ENCODE measurements at regions of chr15 and their contacts with region 1.

Region 1: GRCh38 chr15:90931737-90932659 is at the start of gene HDDC3:
- DNase-seq: peak; percentile 87
- ATAC-seq: peak; percentile 59
- H3K4me3 ChIP-seq: peak within 1 kb of the TSS; percentile 92 to 93
- H3K27ac ChIP-seq: peak within 1 kb of the TSS; percentile 78
- H3K4me1 ChIP-seq: peaks cover 20 to 53% of the 10 kb centered on the region in 2 experiments; a peak in 3 of 4 replicates
- H3K27me3 ChIP-seq: no peaks in the 10 kb centered on the region
- CTCF ChIP-seq: peak in 2 of 3 experiments; percentile 84 to 92; a peak in 4 of 6 replicates
- POLR2A ChIP-seq: peak; percentile 56
- RAD21 ChIP-seq: no peak
- total RNA-seq, gene HDDC3: 20.4 TPM

Region 2: GRCh38 chr15:90291679-90292356 is 640.2 kb before region 1 on chr15:
- CTCF ChIA-PET with region 1: interaction called, 16 read pairs
- POLR2A ChIA-PET with region 1: interaction called, 3 read pairs
- RAD21 ChIA-PET with region 1: no interaction called
- intact Hi-C with region 1: loop called (anchors 1 kb)
- DNase-seq: peak; percentile 71
- ATAC-seq: peak; percentile 58
- H3K4me3 ChIP-seq: no peak overlapping the region
- H3K27ac ChIP-seq: no peak overlapping the region
- H3K4me1 ChIP-seq: peaks cover 7 to 24% of the 10 kb centered on the region in 2 experiments; a peak in 3 of 4 replicates
- H3K27me3 ChIP-seq: no peaks in the 10 kb centered on the region
- CTCF ChIP-seq: no peak
- POLR2A ChIP-seq: no peak
- RAD21 ChIP-seq: no peak

Region 3: GRCh38 chr15:90750186-90750585 is 181.8 kb before region 1 on chr15:
- CTCF ChIA-PET with region 1: no interaction called
- POLR2A ChIA-PET with region 1: no interaction called
- RAD21 ChIA-PET with region 1: no interaction called
- intact Hi-C with region 1: no loop called
- DNase-seq: no peak
- ATAC-seq: no peak
- H3K4me3 ChIP-seq: no peak overlapping the region
- H3K27ac ChIP-seq: no peak overlapping the region
- H3K4me1 ChIP-seq: no peaks in the 10 kb centered on the region
- H3K27me3 ChIP-seq: no peaks in the 10 kb centered on the region
- CTCF ChIP-seq: no peak
- POLR2A ChIP-seq: no peak
- RAD21 ChIP-seq: no peak

Region 4: DNA sequence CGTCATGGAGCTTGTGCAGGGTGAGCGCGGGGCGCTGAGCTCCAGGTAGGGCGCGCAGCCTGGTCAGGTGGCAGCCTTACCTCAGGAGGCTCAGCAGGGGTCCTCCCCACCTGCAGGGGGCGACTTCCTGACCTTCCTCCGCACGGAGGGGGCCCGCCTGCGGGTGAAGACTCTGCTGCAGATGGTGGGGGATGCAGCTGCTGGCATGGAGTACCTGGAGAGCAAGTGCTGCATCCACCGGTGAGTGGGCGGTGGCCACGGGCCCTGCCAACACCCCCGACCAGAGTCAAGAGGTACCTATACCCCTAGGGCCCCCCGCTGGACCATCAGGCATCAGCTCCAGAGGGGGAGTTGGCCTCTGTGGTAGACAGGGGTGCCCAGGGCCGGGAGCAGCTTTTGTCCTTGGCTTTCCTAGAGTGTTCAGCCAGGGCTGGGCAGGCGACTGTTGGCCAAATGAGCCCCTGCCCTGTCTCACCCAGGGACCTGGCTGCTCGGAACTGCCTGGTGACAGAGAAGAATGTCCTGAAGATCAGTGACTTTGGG is 38.8 kb before region 1 on chr15:
- CTCF ChIA-PET with region 1: interaction called, 20 read pairs
- POLR2A ChIA-PET with region 1: interaction called, 3 read pairs
- RAD21 ChIA-PET with region 1: interaction called in 1 of 2 experiments, 3 read pairs
- intact Hi-C with region 1: no loop called
- DNase-seq: peak; percentile 50
- ATAC-seq: peak; percentile 92
- H3K4me3 ChIP-seq: peak overlapping the region; percentile 68 to 79
- H3K27ac ChIP-seq: peak overlapping the region; percentile 41; the same call in 1 of the 2 replicates
- H3K4me1 ChIP-seq: peaks cover 0 to 15% of the 10 kb centered on the region in 2 experiments; a peak in 2 of 4 replicates
- H3K27me3 ChIP-seq: no peaks in the 10 kb centered on the region
- CTCF ChIP-seq: peak; percentile 55 to 70 (median 65); a peak in 5 of 6 replicates
- POLR2A ChIP-seq: peak; percentile 64
- RAD21 ChIP-seq: no peak; the same call in 1 of the 2 replicates

Region 5: DNA sequence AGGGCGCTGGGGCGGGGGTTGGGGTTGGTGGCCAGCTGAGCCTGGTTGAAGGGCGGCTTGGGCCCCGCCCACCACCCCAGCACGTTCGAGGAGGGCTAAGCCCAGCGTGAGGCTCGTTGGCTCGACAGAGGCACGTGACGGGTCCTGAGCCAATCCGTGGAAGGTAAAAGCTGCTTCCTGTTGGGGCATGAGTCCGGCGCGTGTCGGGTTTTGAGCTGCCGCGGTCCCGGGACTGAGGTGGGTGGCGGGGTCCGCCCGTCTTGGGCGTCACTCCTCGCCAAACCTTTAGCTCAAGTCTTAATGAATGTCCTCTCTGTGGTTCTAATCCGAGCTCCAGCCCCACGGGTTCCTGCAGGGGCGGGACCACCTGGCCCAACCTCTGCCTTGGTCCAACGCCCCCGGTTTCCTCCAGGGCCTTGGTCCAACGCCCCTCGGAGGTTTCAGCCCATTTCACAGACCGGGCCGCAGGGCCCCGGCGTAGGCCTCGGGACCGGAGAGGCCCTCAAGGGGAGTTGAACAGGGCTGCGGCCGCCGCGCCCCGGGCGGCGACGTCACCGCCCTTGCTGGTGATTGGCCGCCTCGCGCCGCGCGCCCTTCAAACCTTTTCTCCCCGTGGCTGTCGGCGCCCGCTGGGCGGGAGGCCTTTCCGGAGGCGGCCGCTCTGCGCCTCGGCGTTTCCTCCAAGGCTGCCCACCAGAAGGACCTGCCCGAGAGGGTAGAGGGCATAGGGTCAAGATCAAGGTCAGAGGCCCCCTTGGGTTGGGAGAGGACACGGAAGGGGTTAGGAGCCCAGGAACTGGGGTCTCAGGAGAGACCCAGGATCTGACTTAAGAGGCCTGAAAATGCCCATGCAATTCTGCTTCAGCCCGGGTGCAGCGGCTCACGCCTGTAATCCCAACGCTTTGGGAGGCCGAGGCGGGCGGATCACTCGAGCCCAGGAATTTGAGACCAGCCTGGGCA is 23.0 kb after region 1 on chr15 and contains the start of gene RCCD1:
- CTCF ChIA-PET with region 1: interaction called, 35 read pairs
- POLR2A ChIA-PET with region 1: interaction called, 21 read pairs
- RAD21 ChIA-PET with region 1: interaction called, 7 to 10 read pairs
- intact Hi-C with region 1: loop called (anchors 2 kb)
- DNase-seq: peak; percentile 92
- ATAC-seq: peak; percentile 93
- H3K4me3 ChIP-seq: peak within 1 kb of the TSS; percentile 71 to 75
- H3K27ac ChIP-seq: peak within 1 kb of the TSS; percentile 97
- H3K4me1 ChIP-seq: peaks cover 11 to 23% of the 10 kb centered on the region in 2 experiments
- H3K27me3 ChIP-seq: no peaks in the 10 kb centered on the region
- CTCF ChIP-seq: no peak
- POLR2A ChIP-seq: peak; percentile 84
- RAD21 ChIP-seq: no peak
- total RNA-seq, gene RCCD1: 38.5 TPM

Region 6: GRCh38 chr15:91049378-91050127 is 117.6 kb after region 1 on chr15:
- CTCF ChIA-PET with region 1: interaction called, 21 read pairs
- POLR2A ChIA-PET with region 1: interaction called, 4 read pairs
- RAD21 ChIA-PET with region 1: no interaction called
- intact Hi-C with region 1: loop called (anchors 1 kb)
- DNase-seq: peak; percentile 73
- ATAC-seq: peak; percentile 94
- H3K4me3 ChIP-seq: no peak overlapping the region
- H3K27ac ChIP-seq: no peak overlapping the region
- H3K4me1 ChIP-seq: peaks cover 0 to 6% of the 10 kb centered on the region in 2 experiments; a peak in 1 of 4 replicates
- H3K27me3 ChIP-seq: peaks cover 32% of the 10 kb centered on the region
- CTCF ChIP-seq: peak; percentile 68 to 74 (median 73); a peak in 5 of 6 replicates
- POLR2A ChIP-seq: no peak
- RAD21 ChIP-seq: peak; percentile 87

Measured in HCT116 (cell line).